ENCODE measurements at regions of chr17 and their contacts with region 1.

Region 1: GRCh38 chr17:13594762-13595598 is 6.7 kb downstream of the HS3ST3A1 start:
- DNase-seq: peak; percentile 89
- ATAC-seq: peak; percentile 84
- H3K4me3 Mint-ChIP-seq: no peak overlapping the region
- H3K27ac Mint-ChIP-seq: no peak overlapping the region
- H3K4me1 Mint-ChIP-seq: peaks cover 4% of the 10 kb centered on the region
- H3K27me3 Mint-ChIP-seq: peaks cover 29% of the 10 kb centered on the region

Region 2: DNA sequence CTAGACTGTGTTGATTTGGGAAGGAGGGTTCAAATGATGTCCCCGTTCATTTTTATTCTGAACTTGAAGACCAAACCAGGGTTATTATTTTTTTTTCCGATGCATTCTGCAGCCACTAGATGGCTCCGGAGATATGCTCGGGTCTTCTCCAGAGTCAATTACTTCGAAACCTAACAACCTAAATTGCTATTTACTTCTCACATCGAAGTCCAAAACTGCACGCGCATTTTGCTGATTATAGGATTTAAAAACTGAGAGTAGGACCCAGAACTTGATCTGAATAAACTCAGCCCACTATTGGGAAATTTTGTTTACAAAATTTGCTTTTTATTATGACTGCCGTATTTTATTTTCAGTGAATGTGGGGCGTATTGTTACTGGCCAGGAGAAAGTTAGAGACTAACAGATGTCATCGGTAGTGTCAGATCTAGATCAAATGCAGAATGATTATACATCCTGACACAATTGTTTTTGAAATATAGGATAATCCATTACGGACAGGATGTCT is 257.1 kb before region 1 on chr17:
- CTCF ChIA-PET with region 1: no interaction called
- POLR2A ChIA-PET with region 1: no interaction called
- intact Hi-C with region 1: loop called in 1 of 2 experiments (anchors 5 kb)
- DNase-seq: peak; percentile 26
- ATAC-seq: no peak
- H3K4me3 Mint-ChIP-seq: no peak overlapping the region
- H3K27ac Mint-ChIP-seq: no peak overlapping the region
- H3K4me1 Mint-ChIP-seq: peaks cover 3% of the 10 kb centered on the region
- H3K27me3 Mint-ChIP-seq: peaks cover 20% of the 10 kb centered on the region

Region 3: DNA sequence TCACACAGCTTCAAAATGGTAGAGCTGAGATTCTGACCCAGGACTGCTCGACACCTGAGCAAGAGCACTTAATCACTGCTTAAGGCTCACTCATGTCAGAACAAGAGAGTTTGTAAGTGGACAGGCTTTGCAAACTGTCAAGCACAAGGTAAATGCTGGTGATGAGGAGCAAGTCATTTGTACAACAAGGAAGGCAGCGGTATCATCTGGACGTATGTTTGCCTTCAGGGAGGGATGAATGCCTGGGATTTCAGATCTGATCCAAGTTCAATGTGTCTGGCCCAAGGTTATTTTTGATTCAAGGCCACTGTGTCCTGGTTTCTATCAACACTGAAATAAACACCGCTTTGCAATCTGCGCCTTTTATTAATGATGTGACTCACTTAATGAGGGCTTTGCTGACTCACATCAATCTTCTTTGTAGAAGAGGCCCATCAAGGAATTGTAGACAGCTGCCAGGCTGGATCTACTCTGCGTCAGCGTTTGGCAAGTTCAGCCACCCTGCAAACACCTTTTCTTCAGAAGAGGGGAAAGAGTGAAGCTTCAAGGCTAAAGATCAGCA is 181.1 kb after region 1 on chr17:
- CTCF ChIA-PET with region 1: no interaction called
- POLR2A ChIA-PET with region 1: no interaction called
- intact Hi-C with region 1: no loop called
- DNase-seq: no peak
- ATAC-seq: no peak
- H3K4me3 Mint-ChIP-seq: no peak overlapping the region
- H3K27ac Mint-ChIP-seq: no peak overlapping the region
- H3K4me1 Mint-ChIP-seq: no peaks in the 10 kb centered on the region
- H3K27me3 Mint-ChIP-seq: no peaks in the 10 kb centered on the region

Region 4: GRCh38 chr17:13947499-13947898 is 352.5 kb after region 1 on chr17:
- CTCF ChIA-PET with region 1: no interaction called
- POLR2A ChIA-PET with region 1: no interaction called
- intact Hi-C with region 1: no loop called
- DNase-seq: no peak
- ATAC-seq: no peak
- H3K4me3 Mint-ChIP-seq: no peak overlapping the region
- H3K27ac Mint-ChIP-seq: no peak overlapping the region
- H3K4me1 Mint-ChIP-seq: no peaks in the 10 kb centered on the region
- H3K27me3 Mint-ChIP-seq: no peaks in the 10 kb centered on the region

Region 5: DNA sequence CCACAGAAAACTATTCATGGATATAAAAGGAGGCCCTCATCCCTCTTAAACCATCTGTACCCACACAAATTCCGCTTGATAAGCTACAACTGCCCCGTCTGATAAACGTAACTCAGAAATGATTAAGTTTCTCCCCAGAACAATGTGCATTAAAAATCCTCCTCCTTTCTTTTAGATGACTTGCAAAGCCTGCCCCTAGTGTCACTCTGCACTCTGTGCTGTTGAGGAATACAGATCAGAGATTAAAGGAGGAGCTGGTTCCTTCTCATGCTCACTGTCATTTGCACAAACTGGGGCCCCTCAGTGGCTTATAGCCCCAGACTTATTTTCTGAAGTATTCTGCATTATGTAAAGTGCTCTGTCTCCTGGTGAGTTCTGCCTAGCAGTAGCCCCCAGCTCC is 608.4 kb after region 1 on chr17:
- CTCF ChIA-PET with region 1: no interaction called
- POLR2A ChIA-PET with region 1: no interaction called
- intact Hi-C with region 1: loop called in 1 of 2 experiments (anchors 2 kb)
- DNase-seq: peak; percentile 60
- ATAC-seq: peak; percentile 55
- H3K4me3 Mint-ChIP-seq: no peak overlapping the region
- H3K27ac Mint-ChIP-seq: peak overlapping the region; percentile 71
- H3K4me1 Mint-ChIP-seq: peaks cover 83% of the 10 kb centered on the region
- H3K27me3 Mint-ChIP-seq: no peaks in the 10 kb centered on the region

Region 6: DNA sequence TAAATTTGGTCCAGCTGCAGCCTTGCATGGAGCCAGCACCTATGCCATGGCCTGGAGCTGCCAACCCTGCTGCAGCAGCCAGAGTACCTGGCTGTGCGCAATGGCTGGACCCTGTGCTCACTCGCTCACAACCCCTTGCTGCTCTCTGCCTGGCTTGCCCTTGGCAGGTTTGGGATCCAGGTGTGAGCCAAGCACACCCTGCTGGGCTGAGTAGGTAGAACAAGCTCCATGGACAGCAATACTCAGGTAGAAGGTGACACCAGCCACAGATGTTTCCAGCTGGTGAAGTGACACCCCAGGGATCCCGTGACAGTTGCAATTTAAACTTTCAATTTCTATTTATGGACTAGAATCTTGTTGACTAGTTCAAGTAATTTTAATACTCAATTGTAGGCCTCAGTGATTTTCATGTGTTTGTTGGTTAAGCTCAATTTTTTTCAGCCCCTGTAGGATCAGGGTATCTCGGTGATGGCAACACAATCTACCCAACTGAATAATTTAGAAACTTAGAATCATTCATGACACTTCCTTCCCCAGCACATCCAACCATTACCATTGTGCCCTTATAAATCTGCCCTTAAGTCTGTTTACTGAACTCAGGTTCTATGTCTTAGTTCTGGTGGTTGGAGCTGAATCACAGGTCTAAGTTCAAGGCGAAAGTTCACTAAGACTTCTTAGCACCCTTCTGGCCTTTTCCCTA is 1190.2 kb after region 1 on chr17:
- CTCF ChIA-PET with region 1: no interaction called
- POLR2A ChIA-PET with region 1: no interaction called
- intact Hi-C with region 1: loop called in 1 of 2 experiments (anchors 10 kb)
- DNase-seq: peak; percentile 46
- ATAC-seq: peak; percentile 66
- H3K4me3 Mint-ChIP-seq: no peak overlapping the region
- H3K27ac Mint-ChIP-seq: no peak overlapping the region
- H3K4me1 Mint-ChIP-seq: no peaks in the 10 kb centered on the region
- H3K27me3 Mint-ChIP-seq: peaks cover 4% of the 10 kb centered on the region

Region 7: GRCh38 chr17:14926526-14927122 is 1331.6 kb after region 1 on chr17:
- CTCF ChIA-PET with region 1: interaction called, 6 read pairs
- POLR2A ChIA-PET with region 1: no interaction called
- intact Hi-C with region 1: loop called (anchors 1 kb)
- DNase-seq: peak; percentile 67
- ATAC-seq: no peak
- H3K4me3 Mint-ChIP-seq: no peak overlapping the region
- H3K27ac Mint-ChIP-seq: no peak overlapping the region
- H3K4me1 Mint-ChIP-seq: no peaks in the 10 kb centered on the region
- H3K27me3 Mint-ChIP-seq: peaks cover 12% of the 10 kb centered on the region

Region 8: GRCh38 chr17:15502369-15503112 is 1907.6 kb after region 1 on chr17:
- CTCF ChIA-PET with region 1: no interaction called
- POLR2A ChIA-PET with region 1: no interaction called
- intact Hi-C with region 1: loop called in 1 of 2 experiments (anchors 10 kb)
- DNase-seq: peak; percentile 90
- ATAC-seq: peak; percentile 95
- H3K4me3 Mint-ChIP-seq: no peak overlapping the region
- H3K27ac Mint-ChIP-seq: no peak overlapping the region
- H3K4me1 Mint-ChIP-seq: peaks cover 5% of the 10 kb centered on the region
- H3K27me3 Mint-ChIP-seq: no peaks in the 10 kb centered on the region